ENCODE measurements at regions of chr5 and their contacts with region 1.

Region 1: GRCh38 chr5:141369994-141370848 is at the start of gene PCDHGB3:
- DNase-seq: no peak
- ATAC-seq: peak; percentile 64
- H3K4me3 Mint-ChIP-seq: peak within 1 kb of the TSS; percentile 81
- H3K27ac Mint-ChIP-seq: no peak within 1 kb of the TSS
- H3K4me1 Mint-ChIP-seq: peaks cover 7% of the 10 kb centered on the region
- H3K27me3 Mint-ChIP-seq: peaks cover 54% of the 10 kb centered on the region
- CTCF ChIP-seq: no peak
- total RNA-seq, gene PCDHGB3: 2.0 and 2.6 TPM in 2 replicates

Region 2: GRCh38 chr5:141223112-141223783 is 147.0 kb before region 1 on chr5 and contains the start of gene PCDHB14:
- CTCF ChIA-PET with region 1: no interaction called
- POLR2A ChIA-PET with region 1: no interaction called
- intact Hi-C with region 1: no loop called
- DNase-seq: no peak
- ATAC-seq: no peak
- H3K4me3 Mint-ChIP-seq: no peak within 1 kb of the TSS
- H3K27ac Mint-ChIP-seq: no peak within 1 kb of the TSS
- H3K4me1 Mint-ChIP-seq: peaks cover 2% of the 10 kb centered on the region
- H3K27me3 Mint-ChIP-seq: peaks cover 27% of the 10 kb centered on the region
- CTCF ChIP-seq: no peak
- total RNA-seq, gene PCDHB14: 0.11 TPM in 1 of 2 replicates, not detected in the other

Region 3: GRCh38 chr5:141412854-141413539 is 42.8 kb after region 1 on chr5 and contains the start of gene PCDHGA10:
- CTCF ChIA-PET with region 1: no interaction called
- POLR2A ChIA-PET with region 1: no interaction called
- intact Hi-C with region 1: loop called (anchors 5 kb)
- DNase-seq: no peak
- ATAC-seq: peak; percentile 66
- H3K4me3 Mint-ChIP-seq: peak within 1 kb of the TSS; percentile 86
- H3K27ac Mint-ChIP-seq: peak within 1 kb of the TSS; percentile 41
- H3K4me1 Mint-ChIP-seq: peaks cover 21% of the 10 kb centered on the region
- H3K27me3 Mint-ChIP-seq: peaks cover 52% of the 10 kb centered on the region
- CTCF ChIP-seq: no peak
- total RNA-seq, gene PCDHGA10: 1.2 and 1.3 TPM in 2 replicates